CD4-positive, alpha-beta T cell (primary cell): ENCODE measurements at regions of chr6 and their contacts with region 1.

Region 1: GRCh38 chr6:25992413-25993037 is 29.9 kb downstream of the TRIM38 start:
- DNase-seq: peak; percentile 84 to 96 (median 93)
- ATAC-seq: peak; percentile 95
- H3K4me3 ChIP-seq: peak overlapping the region; percentile 55
- H3K4me3 Mint-ChIP-seq: peak overlapping the region; percentile 97
- H3K27ac ChIP-seq: peak overlapping the region; percentile 31 to 69
- H3K27ac Mint-ChIP-seq: peak overlapping the region; percentile 97
- H3K4me1 ChIP-seq: peaks cover 15% of the 10 kb centered on the region
- H3K4me1 Mint-ChIP-seq: peaks cover 37% of the 10 kb centered on the region
- H3K27me3 ChIP-seq: no peaks in the 10 kb centered on the region
- H3K27me3 Mint-ChIP-seq: no peaks in the 10 kb centered on the region
- CTCF ChIP-seq: peak; percentile 100

Region 2: GRCh38 chr6:25788305-25788922 is 204.1 kb before region 1 on chr6:
- CTCF ChIA-PET with region 1: no interaction called
- POLR2A ChIA-PET with region 1: no interaction called
- intact Hi-C with region 1: loop called (anchors 1 to 2 kb)
- DNase-seq: peak in 13 of 14 experiments; percentile 2 to 68 (median 23)
- ATAC-seq: peak; percentile 48
- H3K4me3 ChIP-seq: no peak overlapping the region
- H3K4me3 Mint-ChIP-seq: no peak overlapping the region
- H3K27ac ChIP-seq: no peak overlapping the region
- H3K27ac Mint-ChIP-seq: no peak overlapping the region
- H3K4me1 ChIP-seq: no peaks in the 10 kb centered on the region
- H3K4me1 Mint-ChIP-seq: no peaks in the 10 kb centered on the region
- H3K27me3 ChIP-seq: no peaks in the 10 kb centered on the region
- H3K27me3 Mint-ChIP-seq: no peaks in the 10 kb centered on the region
- CTCF ChIP-seq: peak; percentile 39

Region 3: DNA sequence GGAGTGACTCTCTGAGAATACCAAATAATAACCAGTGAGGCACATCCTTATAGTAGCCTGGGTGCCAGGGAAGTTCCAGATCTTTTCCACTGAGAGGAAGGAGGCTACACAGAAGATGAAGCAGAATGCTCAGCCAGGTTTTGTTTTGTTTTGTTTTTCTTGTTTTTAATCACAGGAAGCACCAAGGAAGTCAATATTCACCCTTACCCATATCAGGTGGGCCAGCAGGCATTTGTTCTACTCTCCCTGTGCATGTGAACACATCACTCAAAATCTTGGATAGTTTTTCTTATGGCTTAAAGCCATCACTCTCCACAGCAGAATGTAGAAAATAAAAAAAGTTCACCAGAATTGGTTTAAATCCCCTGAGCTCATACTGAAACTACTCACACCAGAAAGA is 171.2 kb before region 1 on chr6:
- CTCF ChIA-PET with region 1: no interaction called
- POLR2A ChIA-PET with region 1: no interaction called
- intact Hi-C with region 1: no loop called
- DNase-seq: no peak
- ATAC-seq: no peak
- H3K4me3 ChIP-seq: no peak overlapping the region
- H3K4me3 Mint-ChIP-seq: no peak overlapping the region
- H3K27ac ChIP-seq: no peak overlapping the region
- H3K27ac Mint-ChIP-seq: no peak overlapping the region
- H3K4me1 ChIP-seq: no peaks in the 10 kb centered on the region
- H3K4me1 Mint-ChIP-seq: no peaks in the 10 kb centered on the region
- H3K27me3 ChIP-seq: no peaks in the 10 kb centered on the region
- H3K27me3 Mint-ChIP-seq: peaks cover 22% of the 10 kb centered on the region
- CTCF ChIP-seq: no peak

Region 4: GRCh38 chr6:25889877-25890853 is 102.4 kb before region 1 on chr6:
- CTCF ChIA-PET with region 1: interaction called, 7 read pairs
- POLR2A ChIA-PET with region 1: no interaction called
- intact Hi-C with region 1: loop called in 1 of 2 experiments (anchors 10 kb)
- DNase-seq: peak in 5 of 14 experiments; percentile 1 to 59 (median 36)
- ATAC-seq: no peak
- H3K4me3 ChIP-seq: no peak overlapping the region
- H3K4me3 Mint-ChIP-seq: no peak overlapping the region
- H3K27ac ChIP-seq: no peak overlapping the region
- H3K27ac Mint-ChIP-seq: no peak overlapping the region
- H3K4me1 ChIP-seq: no peaks in the 10 kb centered on the region
- H3K4me1 Mint-ChIP-seq: no peaks in the 10 kb centered on the region
- H3K27me3 ChIP-seq: no peaks in the 10 kb centered on the region
- H3K27me3 Mint-ChIP-seq: peaks cover 3% of the 10 kb centered on the region
- CTCF ChIP-seq: peak; percentile 39

Region 5: GRCh38 chr6:25922301-25922700 is 70.2 kb before region 1 on chr6:
- CTCF ChIA-PET with region 1: no interaction called
- POLR2A ChIA-PET with region 1: no interaction called
- intact Hi-C with region 1: no loop called
- DNase-seq: no peak
- ATAC-seq: no peak
- H3K4me3 ChIP-seq: no peak overlapping the region
- H3K4me3 Mint-ChIP-seq: no peak overlapping the region
- H3K27ac ChIP-seq: no peak overlapping the region
- H3K27ac Mint-ChIP-seq: no peak overlapping the region
- H3K4me1 ChIP-seq: no peaks in the 10 kb centered on the region
- H3K4me1 Mint-ChIP-seq: no peaks in the 10 kb centered on the region
- H3K27me3 ChIP-seq: no peaks in the 10 kb centered on the region
- H3K27me3 Mint-ChIP-seq: no peaks in the 10 kb centered on the region
- CTCF ChIP-seq: no peak

Region 6: DNA sequence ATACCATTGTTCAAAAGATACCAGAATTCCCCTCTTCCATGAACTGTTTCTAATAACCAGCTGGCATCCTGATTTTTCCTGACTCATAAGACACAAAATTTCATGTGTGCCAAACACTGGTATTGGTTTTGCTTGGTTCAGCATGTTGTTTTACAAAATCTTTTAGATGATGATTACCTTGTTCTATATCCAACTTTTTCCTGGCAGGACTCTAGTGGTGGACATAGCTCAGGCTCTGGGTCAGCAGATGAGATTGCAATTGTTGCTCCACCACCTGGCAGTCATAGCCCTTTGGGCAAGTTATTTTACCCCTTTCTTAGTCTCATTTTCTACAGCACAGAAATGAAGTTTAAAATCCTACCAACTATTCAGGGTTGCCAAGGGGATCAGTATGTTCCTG is 23.8 kb before region 1 on chr6:
- CTCF ChIA-PET with region 1: interaction called, 38 read pairs
- POLR2A ChIA-PET with region 1: interaction called, 33 read pairs
- intact Hi-C with region 1: no loop called
- DNase-seq: no peak
- ATAC-seq: no peak
- H3K4me3 ChIP-seq: no peak overlapping the region
- H3K4me3 Mint-ChIP-seq: peak overlapping the region; percentile 56
- H3K27ac ChIP-seq: no peak overlapping the region
- H3K27ac Mint-ChIP-seq: peak overlapping the region; percentile 24
- H3K4me1 ChIP-seq: peaks cover 43% of the 10 kb centered on the region
- H3K4me1 Mint-ChIP-seq: peaks cover 74% of the 10 kb centered on the region
- H3K27me3 ChIP-seq: no peaks in the 10 kb centered on the region
- H3K27me3 Mint-ChIP-seq: no peaks in the 10 kb centered on the region
- CTCF ChIP-seq: no peak

Region 7: DNA sequence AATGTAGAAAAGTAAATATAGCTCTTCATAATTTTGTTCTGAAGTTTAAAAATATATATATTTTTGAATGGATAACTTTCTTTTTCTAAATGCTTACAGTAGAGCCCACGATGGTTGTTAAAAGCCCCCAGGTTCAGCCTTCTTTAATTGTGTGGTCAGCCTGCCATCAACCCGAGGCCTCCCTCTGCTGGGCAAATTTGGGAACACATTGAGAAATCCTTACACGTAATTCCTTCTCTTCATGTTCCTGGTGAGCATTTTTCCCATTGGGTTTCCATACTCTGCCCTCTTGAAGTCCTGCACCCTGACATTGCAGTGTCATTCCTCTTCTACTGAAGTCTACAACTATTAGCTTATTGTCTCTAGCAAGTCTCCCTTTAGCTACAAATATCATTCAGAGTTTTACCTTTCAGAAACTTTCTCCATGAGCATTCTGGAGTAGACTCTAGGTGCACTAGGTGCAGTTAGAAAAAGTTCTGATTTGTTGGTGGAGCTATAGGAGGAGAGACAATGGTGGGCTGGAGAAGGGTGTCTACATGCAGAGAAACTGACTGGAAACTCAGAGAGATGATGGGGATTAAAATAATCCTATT is 10.7 kb after region 1 on chr6:
- CTCF ChIA-PET with region 1: interaction called, 39 read pairs
- POLR2A ChIA-PET with region 1: interaction called, 8 read pairs
- intact Hi-C with region 1: no loop called
- DNase-seq: peak in 13 of 14 experiments; percentile 18 to 70 (median 38)
- ATAC-seq: peak; percentile 58
- H3K4me3 ChIP-seq: no peak overlapping the region
- H3K4me3 Mint-ChIP-seq: no peak overlapping the region
- H3K27ac ChIP-seq: no peak overlapping the region
- H3K27ac Mint-ChIP-seq: no peak overlapping the region
- H3K4me1 ChIP-seq: no peaks in the 10 kb centered on the region
- H3K4me1 Mint-ChIP-seq: peaks cover 10% of the 10 kb centered on the region
- H3K27me3 ChIP-seq: no peaks in the 10 kb centered on the region
- H3K27me3 Mint-ChIP-seq: no peaks in the 10 kb centered on the region
- CTCF ChIP-seq: peak; percentile 90

Region 8: DNA sequence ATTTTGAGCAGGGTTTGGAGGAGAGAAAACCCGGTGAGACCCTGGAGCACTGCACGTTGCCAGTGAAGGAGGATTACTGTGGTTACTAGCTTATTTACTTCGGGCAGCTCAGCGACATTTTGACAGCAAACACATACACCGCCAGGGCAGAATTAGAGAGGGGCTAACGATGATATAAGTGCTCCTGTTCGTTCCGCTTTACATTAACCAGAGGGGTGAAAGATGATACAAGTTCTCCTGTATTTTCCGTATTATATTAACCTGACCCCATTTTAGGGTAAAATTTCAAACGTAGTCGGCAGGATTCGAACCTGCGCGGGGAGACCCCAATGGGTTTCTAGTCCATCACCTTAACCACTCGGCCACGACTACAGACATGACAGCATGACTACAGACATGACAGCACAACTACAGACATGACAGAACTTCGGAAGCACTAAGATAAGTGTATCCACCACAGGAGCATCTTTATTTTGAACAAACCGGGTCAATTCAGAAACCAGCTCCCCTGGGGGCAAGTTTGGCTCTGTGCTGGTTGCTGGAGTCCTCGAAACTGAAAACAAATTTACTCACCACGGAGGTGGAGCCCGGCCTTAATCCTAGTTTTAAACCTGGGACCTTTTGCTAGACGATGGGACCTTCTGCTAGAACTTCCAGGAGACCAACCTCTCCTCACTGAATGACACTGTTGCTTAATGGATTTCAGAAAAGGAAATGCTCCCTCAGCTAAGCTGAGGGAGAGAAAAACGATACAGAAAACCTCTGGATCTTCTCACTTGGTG is 1560.8 kb after region 1 on chr6:
- CTCF ChIA-PET with region 1: no interaction called
- POLR2A ChIA-PET with region 1: no interaction called
- intact Hi-C with region 1: no loop called
- DNase-seq: no peak
- ATAC-seq: no peak
- H3K4me3 ChIP-seq: no peak overlapping the region
- H3K4me3 Mint-ChIP-seq: no peak overlapping the region
- H3K27ac ChIP-seq: no peak overlapping the region
- H3K27ac Mint-ChIP-seq: no peak overlapping the region
- H3K4me1 ChIP-seq: peaks cover 5% of the 10 kb centered on the region
- H3K4me1 Mint-ChIP-seq: peaks cover 4% of the 10 kb centered on the region
- H3K27me3 ChIP-seq: peaks cover 72 to 94% of the 10 kb centered on the region in 2 experiments
- H3K27me3 Mint-ChIP-seq: peaks cover 89% of the 10 kb centered on the region
- CTCF ChIP-seq: no peak